AG04450 (cell line): ENCODE measurements at regions of chr1 and their contacts with region 1.

Region 1: DNA sequence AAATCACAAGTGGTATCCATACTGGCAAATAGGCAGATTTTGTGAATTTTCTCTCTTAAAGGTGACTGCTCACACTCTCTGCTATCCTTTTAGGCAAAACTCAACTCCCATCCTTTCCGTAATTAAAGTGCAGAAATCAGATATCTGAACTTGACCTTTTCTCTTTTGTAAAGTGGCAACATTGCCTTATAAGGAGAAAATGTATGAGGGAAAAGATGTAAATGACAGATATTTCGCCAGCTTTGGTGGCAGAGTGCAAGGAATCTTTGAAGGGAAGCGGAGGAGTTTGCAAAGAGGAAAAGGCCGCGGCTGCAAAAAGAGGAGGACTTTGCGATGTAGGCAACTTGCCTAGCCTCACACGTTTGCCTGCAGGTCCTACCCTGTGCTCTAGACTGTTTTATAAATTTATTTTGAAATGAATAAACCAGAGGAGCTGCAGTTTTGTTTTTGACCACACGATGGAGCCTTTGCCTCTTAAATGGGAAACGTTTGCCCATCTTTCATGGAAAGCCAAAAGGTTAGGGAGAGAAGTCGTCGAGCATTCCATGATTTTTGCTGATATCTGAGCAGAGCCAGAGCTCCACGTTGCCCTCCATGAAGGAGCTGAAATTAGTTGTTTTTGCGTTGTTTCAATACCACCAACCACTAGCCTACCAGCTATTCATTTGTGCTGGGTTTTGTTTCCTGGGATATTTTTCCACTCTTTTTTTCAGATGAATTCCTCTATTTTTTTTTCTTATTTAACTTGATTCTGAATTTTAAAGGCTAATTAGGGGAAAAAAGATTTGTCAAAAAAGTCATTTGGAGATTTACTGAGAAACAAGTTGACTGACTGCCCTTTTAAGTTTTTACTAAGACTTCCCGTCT is 242.3 kb downstream of the LMX1A start:
- DNase-seq: no peak
- H3K4me3 ChIP-seq: no peak overlapping the region
- H3K27ac ChIP-seq: no peak overlapping the region
- H3K27me3 ChIP-seq: peaks cover 2% of the 10 kb centered on the region
- CTCF ChIP-seq: peak; percentile 80

Region 2: GRCh38 chr1:164886101-164886500 is 228.2 kb before region 1 on chr1:
- CTCF ChIA-PET with region 1: no interaction called
- POLR2A ChIA-PET with region 1: no interaction called
- DNase-seq: no peak
- H3K4me3 ChIP-seq: no peak overlapping the region
- H3K27ac ChIP-seq: no peak overlapping the region
- H3K27me3 ChIP-seq: no peaks in the 10 kb centered on the region
- CTCF ChIP-seq: no peak

Region 3: DNA sequence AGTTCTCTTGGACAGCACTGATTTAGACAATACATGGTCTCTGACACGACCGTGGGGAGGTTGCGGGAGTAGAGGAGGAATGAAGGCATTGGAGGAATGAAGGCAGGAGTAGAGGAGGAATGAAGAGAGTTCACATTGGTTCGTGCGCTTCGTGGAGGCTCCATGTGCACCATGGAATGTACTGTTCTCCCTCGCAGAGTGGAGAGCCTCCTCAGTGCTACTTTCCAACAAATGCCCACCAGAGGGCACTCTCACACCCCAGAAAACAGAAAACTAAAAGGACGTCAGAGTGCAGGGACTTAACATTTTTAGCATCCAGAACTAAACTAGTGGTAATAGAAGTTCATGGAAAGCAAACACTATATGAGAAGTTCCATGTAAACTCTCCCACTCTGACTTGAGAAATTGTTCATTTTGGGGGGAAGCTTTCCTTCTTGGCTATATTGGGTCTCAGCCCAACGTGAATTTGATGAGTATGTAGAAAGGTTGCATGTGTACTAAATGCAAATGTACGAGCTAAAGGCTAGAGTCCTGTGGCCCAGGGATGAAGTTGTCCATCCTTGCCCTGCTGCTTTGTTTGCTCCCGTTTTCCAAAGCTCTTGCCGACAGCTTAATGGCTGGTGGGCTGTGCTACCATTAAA is 30.6 kb after region 1 on chr1:
- CTCF ChIA-PET with region 1: interaction called, 10 read pairs
- POLR2A ChIA-PET with region 1: no interaction called
- DNase-seq: peak; percentile 8
- H3K4me3 ChIP-seq: no peak overlapping the region
- H3K27ac ChIP-seq: no peak overlapping the region
- H3K27me3 ChIP-seq: no peaks in the 10 kb centered on the region
- CTCF ChIP-seq: peak; percentile 80

Region 4: DNA sequence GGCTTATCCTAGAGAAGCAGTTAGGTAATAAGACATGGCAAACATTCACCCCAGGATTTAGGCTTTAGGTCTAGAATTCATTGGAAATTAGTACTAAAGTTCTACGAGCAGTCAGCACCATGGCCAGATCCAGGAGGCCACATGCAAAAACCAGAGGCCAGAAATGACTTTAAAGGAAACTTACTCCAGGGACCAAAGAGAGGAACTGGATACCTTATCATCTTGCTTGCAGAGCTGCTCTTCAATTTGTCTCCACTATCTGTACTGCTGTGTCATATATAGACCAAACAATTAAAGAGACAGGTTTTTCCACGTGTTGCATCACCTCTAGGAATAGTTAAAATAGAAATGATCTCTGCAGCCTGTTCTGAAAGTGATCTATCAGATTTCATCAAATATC is 114.4 kb after region 1 on chr1:
- CTCF ChIA-PET with region 1: no interaction called
- POLR2A ChIA-PET with region 1: no interaction called
- DNase-seq: no peak
- H3K4me3 ChIP-seq: no peak overlapping the region
- H3K27ac ChIP-seq: no peak overlapping the region
- H3K27me3 ChIP-seq: no peaks in the 10 kb centered on the region
- CTCF ChIP-seq: no peak